ENCODE measurements at regions of chr13 and their contacts with region 1.

Region 1: GRCh38 chr13:20160847-20161274 is at the start of gene GJA3:
- DNase-seq: no peak
- H3K4me3 ChIP-seq: peak within 1 kb of the TSS in 3 of 4 donors; percentile 12 to 41 (median 40)
- H3K27ac ChIP-seq: no peak within 1 kb of the TSS
- H3K4me1 ChIP-seq: peaks cover 4 to 26% (median 16%) of the 10 kb centered on the region in 4 donors
- H3K27me3 ChIP-seq: peaks cover 80% of the 10 kb centered on the region
- CTCF ChIP-seq: no peak
- EP300 ChIP-seq: no peak
- POLR2A ChIP-seq: no peak
- total RNA-seq, gene GJA3: 0.14 TPM in 1 of 4 donors, not detected in the others

Region 2: GRCh38 chr13:20090349-20090748 is 70.5 kb before region 1 on chr13:
- in situ Hi-C with region 1: no loop called
- intact Hi-C with region 1: loop called (anchors 10 kb)
- DNase-seq: no peak
- H3K4me3 ChIP-seq: no peak overlapping the region
- H3K27ac ChIP-seq: no peak overlapping the region
- H3K4me1 ChIP-seq: no peaks in the 10 kb centered on the region
- H3K27me3 ChIP-seq: no peaks in the 10 kb centered on the region
- CTCF ChIP-seq: peak in 1 of 5 experiments; percentile 21
- EP300 ChIP-seq: no peak
- POLR2A ChIP-seq: no peak